Heart right ventricle (tissue), 16 donors: ENCODE measurements at regions of chr2 and their contacts with region 1.

Region 1: DNA sequence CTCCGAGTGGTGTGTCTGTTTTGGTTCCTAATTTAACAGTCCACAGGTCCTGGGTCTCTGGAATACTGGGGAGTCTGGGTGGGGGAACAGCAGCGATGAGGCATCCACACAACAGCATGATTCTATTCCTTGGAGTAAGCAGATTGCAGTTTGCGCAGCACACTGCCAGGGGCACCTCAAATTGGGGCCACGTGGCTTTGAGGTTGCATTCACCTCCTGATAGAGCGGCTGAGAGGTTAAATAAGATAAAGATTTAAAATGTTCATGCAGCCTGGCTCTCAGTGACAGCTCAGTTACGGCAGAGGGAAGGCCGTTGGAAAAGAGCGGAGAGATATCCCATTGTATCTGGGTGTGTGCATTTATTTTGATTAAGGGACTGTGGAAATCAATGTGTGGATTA is 202.3 kb downstream of the ASB1 start:
- DNase-seq: no peak
- ATAC-seq: no peak
- H3K4me3 ChIP-seq: no peak overlapping the region
- H3K27ac ChIP-seq: no peak overlapping the region
- H3K4me1 ChIP-seq: peaks cover 0 to 8% (median 0%) of the 10 kb centered on the region in 9 donors
- H3K27me3 ChIP-seq: no peaks in the 10 kb centered on the region
- CTCF ChIP-seq: no peak

Region 2: DNA sequence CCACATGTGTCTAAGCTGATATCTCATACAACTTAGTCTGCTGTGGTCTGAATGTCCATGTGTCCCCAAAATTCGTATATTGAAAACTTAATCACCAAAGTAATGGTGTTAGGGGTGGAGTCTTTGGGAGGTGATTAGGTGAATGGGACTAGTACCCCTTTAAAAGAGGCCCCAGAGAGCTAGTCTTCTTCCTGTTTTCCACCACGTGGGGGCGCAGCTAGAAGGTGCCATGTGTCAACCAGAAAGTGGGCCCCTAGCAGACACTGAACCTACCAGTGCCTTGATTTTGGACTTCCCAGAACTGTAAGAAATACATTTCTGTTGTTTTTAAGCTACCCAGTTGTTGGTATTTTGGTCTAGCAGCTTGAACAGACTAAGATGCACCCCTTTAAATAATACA is 115.7 kb before region 1 on chr2:
- intact Hi-C with region 1: loop called in 1 of 10 experiments (anchors 10 kb)
- DNase-seq: no peak
- ATAC-seq: peak in 3 of 8 donors; percentile 51 to 64 (median 62)
- H3K4me3 ChIP-seq: no peak overlapping the region
- H3K27ac ChIP-seq: no peak overlapping the region
- H3K4me1 ChIP-seq: no peaks in the 10 kb centered on the region
- H3K27me3 ChIP-seq: peaks cover 0 to 16% (median 8%) of the 10 kb centered on the region in 7 donors
- CTCF ChIP-seq: peak; percentile 24 to 62 (median 50)